ENCODE measurements at regions of chr12 and their contacts with region 1.

Region 1: GRCh38 chr12:21677622-21678277 is 20.1 kb upstream of the LDHB start:
- DNase-seq: no peak
- H3K4me3 ChIP-seq: no peak overlapping the region
- H3K27ac ChIP-seq: no peak overlapping the region
- H3K4me1 ChIP-seq: no peaks in the 10 kb centered on the region
- H3K27me3 ChIP-seq: peaks cover 32% of the 10 kb centered on the region
- CTCF ChIP-seq: no peak

Region 2: DNA sequence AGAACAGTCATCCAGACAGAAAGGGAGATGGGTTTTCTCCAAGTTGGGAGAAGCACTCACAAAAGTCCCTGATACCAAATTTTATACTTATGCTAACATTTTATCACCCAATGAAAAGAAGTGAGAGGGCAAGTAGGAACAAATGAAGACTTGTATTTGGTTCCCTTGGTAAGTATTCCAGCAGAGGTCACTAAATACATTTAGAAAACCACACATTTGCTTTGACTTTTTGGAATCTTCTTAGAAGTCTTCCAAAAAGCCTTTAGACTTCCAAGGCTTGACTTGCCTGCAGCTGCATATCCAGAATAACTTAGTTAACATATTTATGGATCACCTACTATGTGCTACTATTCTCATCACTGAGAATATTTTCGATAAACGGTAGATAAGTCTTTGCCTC is 70.0 kb before region 1 on chr12:
- CTCF ChIA-PET with region 1: no interaction called
- POLR2A ChIA-PET with region 1: no interaction called
- intact Hi-C with region 1: loop called (anchors 1 kb)
- DNase-seq: peak; percentile 34
- H3K4me3 ChIP-seq: no peak overlapping the region
- H3K27ac ChIP-seq: no peak overlapping the region
- H3K4me1 ChIP-seq: no peaks in the 10 kb centered on the region
- H3K27me3 ChIP-seq: peaks cover 32% of the 10 kb centered on the region
- CTCF ChIP-seq: peak; percentile 47

Measured in A673 (cell line).